CD8-positive, alpha-beta memory T cell (primary cell): ENCODE measurements at regions of chr13 and their contacts with region 1.

Region 1: GRCh38 chr13:79423801-79424642 is 18.0 kb upstream of the RBM26 start:
- DNase-seq: peak in 2 of 5 donors; percentile 30 to 39
- H3K4me3 ChIP-seq: no peak overlapping the region
- H3K4me3 Mint-ChIP-seq: no peak overlapping the region
- H3K27ac ChIP-seq: no peak overlapping the region
- H3K27ac Mint-ChIP-seq: no peak overlapping the region
- H3K4me1 ChIP-seq: no peaks in the 10 kb centered on the region
- H3K4me1 Mint-ChIP-seq: peaks cover 0 to 3% (median 0%) of the 10 kb centered on the region in 3 donors
- H3K27me3 ChIP-seq: no peaks in the 10 kb centered on the region
- H3K27me3 Mint-ChIP-seq: no peaks in the 10 kb centered on the region

Region 2: GRCh38 chr13:79405829-79406596 is 18.0 kb before region 1 on chr13 and contains the start of gene RBM26:
- CTCF ChIA-PET with region 1: interaction called, 10 read pairs
- POLR2A ChIA-PET with region 1: no interaction called
- DNase-seq: peak; percentile 90 to 97 (median 93)
- H3K4me3 ChIP-seq: peak within 1 kb of the TSS; percentile 87
- H3K4me3 Mint-ChIP-seq: peak within 1 kb of the TSS in 4 of 7 donors; percentile 91 to 96 (median 94)
- H3K27ac ChIP-seq: peak within 1 kb of the TSS; percentile 94
- H3K27ac Mint-ChIP-seq: peak within 1 kb of the TSS in 7 of 8 donors; percentile 97 to 99 (median 98)
- H3K4me1 ChIP-seq: peaks cover 50% of the 10 kb centered on the region
- H3K4me1 Mint-ChIP-seq: peaks cover 15 to 25% (median 18%) of the 10 kb centered on the region in 3 donors
- H3K27me3 ChIP-seq: no peaks in the 10 kb centered on the region
- H3K27me3 Mint-ChIP-seq: no peaks in the 10 kb centered on the region
- total RNA-seq, gene RBM26: 59.4 to 61.7 TPM

Region 3: GRCh38 chr13:79480954-79481684 is 57.1 kb after region 1 on chr13 and contains the start of gene NDFIP2:
- CTCF ChIA-PET with region 1: interaction called, 16 read pairs
- POLR2A ChIA-PET with region 1: no interaction called
- DNase-seq: peak; percentile 76 to 88 (median 84)
- H3K4me3 ChIP-seq: peak within 1 kb of the TSS; percentile 77
- H3K4me3 Mint-ChIP-seq: peak within 1 kb of the TSS; percentile 87 to 93 (median 92)
- H3K27ac ChIP-seq: peak within 1 kb of the TSS; percentile 68
- H3K27ac Mint-ChIP-seq: peak within 1 kb of the TSS; percentile 83 to 96 (median 90)
- H3K4me1 ChIP-seq: peaks cover 24% of the 10 kb centered on the region
- H3K4me1 Mint-ChIP-seq: peaks cover 22 to 48% (median 45%) of the 10 kb centered on the region in 3 donors
- H3K27me3 ChIP-seq: no peaks in the 10 kb centered on the region
- H3K27me3 Mint-ChIP-seq: peaks cover 0 to 1% of the 10 kb centered on the region in 2 donors
- total RNA-seq, gene NDFIP2: 94.4 to 102 TPM

Region 4: DNA sequence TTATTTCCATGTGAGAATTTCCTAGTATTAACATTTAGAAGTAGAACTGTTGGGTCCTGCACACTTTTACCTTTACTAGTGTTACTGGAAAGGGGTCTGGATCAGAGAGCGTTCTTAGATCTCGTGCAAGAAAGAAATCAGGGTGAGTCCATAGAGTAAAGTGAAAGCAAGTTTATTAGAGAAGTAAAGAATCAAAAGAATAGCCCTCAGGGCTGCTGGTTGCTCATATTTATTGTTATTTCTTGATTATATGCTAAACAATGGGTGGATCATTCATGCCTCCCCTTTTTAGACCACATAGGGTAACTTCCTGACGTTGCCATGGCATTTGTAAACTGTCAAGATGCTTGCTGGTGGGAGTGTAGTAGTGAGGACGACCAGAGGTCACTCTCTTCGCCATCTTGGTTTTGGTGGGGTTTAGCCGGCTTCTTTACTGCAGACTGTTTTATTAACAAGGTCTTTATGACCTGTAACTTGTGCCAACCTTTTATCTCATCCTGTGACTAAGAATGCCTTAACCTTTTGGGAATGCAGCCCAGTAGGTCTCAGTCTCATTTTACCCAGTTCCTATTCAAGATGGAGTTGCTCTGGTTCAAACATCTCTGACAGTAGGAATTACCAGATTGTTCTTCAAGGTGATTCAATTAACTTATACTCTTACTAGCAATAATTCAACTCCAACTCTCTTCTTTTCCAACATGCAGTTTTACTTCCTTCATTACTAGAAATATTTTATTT is 84.4 kb after region 1 on chr13:
- CTCF ChIA-PET with region 1: no interaction called
- POLR2A ChIA-PET with region 1: no interaction called
- DNase-seq: no peak
- H3K4me3 ChIP-seq: no peak overlapping the region
- H3K4me3 Mint-ChIP-seq: no peak overlapping the region
- H3K27ac ChIP-seq: no peak overlapping the region
- H3K27ac Mint-ChIP-seq: no peak overlapping the region
- H3K4me1 ChIP-seq: no peaks in the 10 kb centered on the region
- H3K4me1 Mint-ChIP-seq: peaks cover under 1 to 14% (median 7%) of the 10 kb centered on the region in 3 donors
- H3K27me3 ChIP-seq: no peaks in the 10 kb centered on the region
- H3K27me3 Mint-ChIP-seq: peaks cover 0 to 2% of the 10 kb centered on the region in 2 donors

Region 5: GRCh38 chr13:79528759-79529191 is 104.8 kb after region 1 on chr13:
- CTCF ChIA-PET with region 1: interaction called, 16 read pairs
- POLR2A ChIA-PET with region 1: no interaction called
- DNase-seq: no peak
- H3K4me3 ChIP-seq: no peak overlapping the region
- H3K4me3 Mint-ChIP-seq: no peak overlapping the region
- H3K27ac ChIP-seq: no peak overlapping the region
- H3K27ac Mint-ChIP-seq: no peak overlapping the region
- H3K4me1 ChIP-seq: no peaks in the 10 kb centered on the region
- H3K4me1 Mint-ChIP-seq: peaks cover 0 to 9% (median 4%) of the 10 kb centered on the region in 3 donors
- H3K27me3 ChIP-seq: no peaks in the 10 kb centered on the region
- H3K27me3 Mint-ChIP-seq: no peaks in the 10 kb centered on the region

Region 6: DNA sequence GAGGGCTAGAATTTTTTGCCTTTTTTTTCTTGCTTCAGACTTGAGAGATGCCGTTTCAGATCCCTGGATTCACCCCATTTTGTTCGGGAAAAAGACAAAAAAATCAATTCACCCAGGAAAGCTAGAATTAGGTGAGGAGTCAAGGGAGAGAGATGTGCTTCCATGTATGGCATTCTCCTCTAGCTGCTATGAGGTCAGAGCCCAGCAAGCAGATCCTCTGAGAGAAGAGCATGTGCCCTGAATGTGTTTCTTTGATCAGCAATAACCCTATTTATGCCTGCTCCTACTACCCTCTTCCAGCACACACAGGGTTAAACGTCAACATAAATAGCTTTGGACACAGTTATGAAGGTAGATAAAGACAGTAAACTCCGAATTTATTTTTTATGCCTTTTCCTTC is 110.6 kb after region 1 on chr13:
- CTCF ChIA-PET with region 1: interaction called, 101 read pairs
- POLR2A ChIA-PET with region 1: interaction called, 4 read pairs
- DNase-seq: no peak
- H3K4me3 ChIP-seq: no peak overlapping the region
- H3K4me3 Mint-ChIP-seq: no peak overlapping the region
- H3K27ac ChIP-seq: no peak overlapping the region
- H3K27ac Mint-ChIP-seq: no peak overlapping the region
- H3K4me1 ChIP-seq: no peaks in the 10 kb centered on the region
- H3K4me1 Mint-ChIP-seq: peaks cover 0 to 9% (median 4%) of the 10 kb centered on the region in 3 donors
- H3K27me3 ChIP-seq: no peaks in the 10 kb centered on the region
- H3K27me3 Mint-ChIP-seq: no peaks in the 10 kb centered on the region

Region 7: GRCh38 chr13:79541426-79542049 is 117.5 kb after region 1 on chr13:
- CTCF ChIA-PET with region 1: interaction called, 101 read pairs
- POLR2A ChIA-PET with region 1: no interaction called
- DNase-seq: peak in 2 of 5 donors; percentile 49 to 55
- H3K4me3 ChIP-seq: no peak overlapping the region
- H3K4me3 Mint-ChIP-seq: no peak overlapping the region
- H3K27ac ChIP-seq: no peak overlapping the region
- H3K27ac Mint-ChIP-seq: no peak overlapping the region
- H3K4me1 ChIP-seq: no peaks in the 10 kb centered on the region
- H3K4me1 Mint-ChIP-seq: no peaks in the 10 kb centered on the region
- H3K27me3 ChIP-seq: no peaks in the 10 kb centered on the region
- H3K27me3 Mint-ChIP-seq: no peaks in the 10 kb centered on the region

Region 8: GRCh38 chr13:79679334-79679733 is 255.3 kb after region 1 on chr13:
- CTCF ChIA-PET with region 1: no interaction called
- POLR2A ChIA-PET with region 1: no interaction called
- DNase-seq: no peak
- H3K4me3 ChIP-seq: no peak overlapping the region
- H3K4me3 Mint-ChIP-seq: no peak overlapping the region
- H3K27ac ChIP-seq: no peak overlapping the region
- H3K27ac Mint-ChIP-seq: no peak overlapping the region
- H3K4me1 ChIP-seq: no peaks in the 10 kb centered on the region
- H3K4me1 Mint-ChIP-seq: no peaks in the 10 kb centered on the region
- H3K27me3 ChIP-seq: no peaks in the 10 kb centered on the region
- H3K27me3 Mint-ChIP-seq: peaks cover 2 to 4% of the 10 kb centered on the region in 2 donors